ENCODE measurements at regions of chr11 and their contacts with region 1.

Region 1: DNA sequence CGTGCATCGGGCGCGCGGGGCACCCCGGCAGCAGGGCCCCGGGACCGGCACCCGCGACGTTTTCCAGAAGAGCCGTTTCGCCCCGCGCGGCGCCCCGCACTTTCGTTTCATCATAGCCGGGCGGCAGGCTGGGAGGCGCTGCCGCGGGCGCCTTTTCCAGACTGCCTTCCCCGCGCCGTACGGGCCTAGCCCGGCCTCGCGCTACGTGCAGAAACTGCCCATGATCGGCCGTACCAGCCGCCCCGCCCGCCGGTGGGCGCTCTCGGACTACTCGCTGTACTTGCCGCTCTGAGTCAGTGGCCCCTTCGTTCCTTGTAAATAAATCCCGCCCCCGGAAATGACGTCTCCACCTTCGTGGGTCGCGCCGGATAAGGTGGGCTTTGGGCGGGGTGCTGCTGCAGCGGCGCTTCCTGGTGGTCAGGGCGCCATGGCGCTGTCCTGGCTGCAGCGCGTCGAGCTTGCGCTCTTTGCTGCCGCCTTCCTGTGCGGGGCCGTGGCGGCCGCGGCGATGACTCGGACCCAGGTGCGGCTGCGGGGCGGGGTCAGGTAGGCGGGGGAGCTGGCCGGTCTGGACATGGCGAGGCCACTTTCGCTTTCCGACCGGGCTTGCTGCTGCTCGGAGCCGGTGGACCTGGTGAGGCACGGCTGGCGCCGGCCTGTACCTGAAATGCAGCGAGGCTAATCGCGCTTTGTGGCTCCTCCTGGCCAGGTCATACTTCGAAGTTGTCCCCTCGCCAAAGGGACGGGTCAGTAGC is at the start of gene TMEM179B:
- DNase-seq: peak; percentile 98 to 99
- ATAC-seq: peak; percentile 75 to 91 (median 78)
- H3K4me3 ChIP-seq: peak within 1 kb of the TSS; percentile 99
- H3K4me3 Mint-ChIP-seq: peak within 1 kb of the TSS; percentile 94
- H3K27ac ChIP-seq: peak within 1 kb of the TSS; percentile 91
- H3K27ac Mint-ChIP-seq: peak within 1 kb of the TSS; percentile 94 to 96
- H3K4me1 ChIP-seq: peaks cover 44% of the 10 kb centered on the region
- H3K4me1 Mint-ChIP-seq: peaks cover 32 to 45% of the 10 kb centered on the region in 2 donors
- H3K27me3 ChIP-seq: no peaks in the 10 kb centered on the region
- H3K27me3 Mint-ChIP-seq: no peaks in the 10 kb centered on the region
- CTCF ChIP-seq: peak; percentile 57
- total RNA-seq, gene TMEM179B: 33.7 to 41.1 (median 36.3) TPM

Region 2: GRCh38 chr11:62427630-62428233 is 359.4 kb before region 1 on chr11:
- intact Hi-C with region 1: loop called (anchors 1 kb)
- DNase-seq: no peak
- ATAC-seq: peak in 2 of 3 donors; percentile 34 to 43
- H3K4me3 ChIP-seq: no peak overlapping the region
- H3K4me3 Mint-ChIP-seq: peak overlapping the region; percentile 40
- H3K27ac ChIP-seq: peak overlapping the region; percentile 48
- H3K27ac Mint-ChIP-seq: peak overlapping the region; percentile 83 to 89
- H3K4me1 ChIP-seq: peaks cover 19% of the 10 kb centered on the region
- H3K4me1 Mint-ChIP-seq: peaks cover 56 to 64% of the 10 kb centered on the region in 2 donors
- H3K27me3 ChIP-seq: no peaks in the 10 kb centered on the region
- H3K27me3 Mint-ChIP-seq: no peaks in the 10 kb centered on the region
- CTCF ChIP-seq: no peak

Region 3: GRCh38 chr11:62463121-62463542 is 324.1 kb before region 1 on chr11:
- intact Hi-C with region 1: no loop called
- DNase-seq: no peak
- ATAC-seq: peak; percentile 72 to 82 (median 80)
- H3K4me3 ChIP-seq: no peak overlapping the region
- H3K4me3 Mint-ChIP-seq: peak overlapping the region; percentile 81
- H3K27ac ChIP-seq: no peak overlapping the region
- H3K27ac Mint-ChIP-seq: peak overlapping the region; percentile 43 to 85
- H3K4me1 ChIP-seq: peaks cover 7% of the 10 kb centered on the region
- H3K4me1 Mint-ChIP-seq: peaks cover 14% of the 10 kb centered on the region in 2 donors
- H3K27me3 ChIP-seq: no peaks in the 10 kb centered on the region
- H3K27me3 Mint-ChIP-seq: no peaks in the 10 kb centered on the region
- CTCF ChIP-seq: no peak

Region 4: DNA sequence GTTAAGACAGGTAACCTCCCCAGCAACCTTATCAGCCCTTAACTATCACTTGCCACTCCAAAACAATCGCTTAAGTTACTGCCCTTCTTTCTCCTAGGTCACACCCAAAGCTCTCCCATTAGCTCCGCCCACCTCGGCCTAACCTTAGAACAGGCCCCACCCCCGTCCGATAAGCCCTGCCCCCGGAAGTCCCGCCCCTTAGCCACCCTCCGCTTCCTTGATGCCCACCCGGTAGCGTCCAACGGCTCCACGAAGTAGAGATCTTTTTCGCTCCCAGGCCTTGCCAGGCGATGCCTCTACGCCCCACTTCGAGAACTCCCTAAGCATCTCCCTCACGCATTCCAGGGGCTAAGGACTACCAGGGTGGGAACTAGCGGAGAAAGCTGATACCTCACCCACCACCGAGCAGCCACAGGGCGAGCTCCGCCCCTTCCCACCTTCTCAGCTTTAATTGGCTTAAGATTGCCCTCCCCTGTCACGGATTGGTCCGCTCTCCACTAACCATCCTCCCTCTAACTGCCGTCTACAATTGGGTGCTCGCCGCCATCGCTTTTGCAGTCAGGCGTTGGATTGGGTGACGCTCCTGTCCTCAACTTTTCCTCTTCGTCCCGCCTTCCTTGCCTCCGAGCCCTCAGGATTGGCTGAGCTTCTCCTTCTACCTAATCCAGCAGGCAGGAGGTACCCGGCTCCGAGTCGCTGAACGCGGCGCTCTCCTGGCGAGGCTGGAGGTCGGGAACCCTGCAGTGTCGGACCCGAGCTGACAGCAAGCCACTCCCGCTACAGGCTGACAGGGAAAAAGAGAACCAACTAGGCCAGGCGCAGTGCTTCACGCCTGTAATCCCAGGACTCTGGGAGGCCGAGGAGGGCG is 33.2 kb before region 1 on chr11 and contains the start of gene ZBTB3:
- intact Hi-C with region 1: loop called (anchors 2 kb)
- DNase-seq: peak; percentile 93 to 99
- ATAC-seq: peak; percentile 92 to 98 (median 94)
- H3K4me3 ChIP-seq: peak within 1 kb of the TSS; percentile 83
- H3K4me3 Mint-ChIP-seq: peak within 1 kb of the TSS; percentile 96
- H3K27ac ChIP-seq: peak within 1 kb of the TSS; percentile 81
- H3K27ac Mint-ChIP-seq: peak within 1 kb of the TSS; percentile 91 to 96
- H3K4me1 ChIP-seq: peaks cover 22% of the 10 kb centered on the region
- H3K4me1 Mint-ChIP-seq: peaks cover 9 to 10% of the 10 kb centered on the region in 2 donors
- H3K27me3 ChIP-seq: no peaks in the 10 kb centered on the region
- H3K27me3 Mint-ChIP-seq: no peaks in the 10 kb centered on the region
- CTCF ChIP-seq: no peak
- total RNA-seq, gene ZBTB3: 5.4 to 9.6 (median 8.8) TPM

Region 5: DNA sequence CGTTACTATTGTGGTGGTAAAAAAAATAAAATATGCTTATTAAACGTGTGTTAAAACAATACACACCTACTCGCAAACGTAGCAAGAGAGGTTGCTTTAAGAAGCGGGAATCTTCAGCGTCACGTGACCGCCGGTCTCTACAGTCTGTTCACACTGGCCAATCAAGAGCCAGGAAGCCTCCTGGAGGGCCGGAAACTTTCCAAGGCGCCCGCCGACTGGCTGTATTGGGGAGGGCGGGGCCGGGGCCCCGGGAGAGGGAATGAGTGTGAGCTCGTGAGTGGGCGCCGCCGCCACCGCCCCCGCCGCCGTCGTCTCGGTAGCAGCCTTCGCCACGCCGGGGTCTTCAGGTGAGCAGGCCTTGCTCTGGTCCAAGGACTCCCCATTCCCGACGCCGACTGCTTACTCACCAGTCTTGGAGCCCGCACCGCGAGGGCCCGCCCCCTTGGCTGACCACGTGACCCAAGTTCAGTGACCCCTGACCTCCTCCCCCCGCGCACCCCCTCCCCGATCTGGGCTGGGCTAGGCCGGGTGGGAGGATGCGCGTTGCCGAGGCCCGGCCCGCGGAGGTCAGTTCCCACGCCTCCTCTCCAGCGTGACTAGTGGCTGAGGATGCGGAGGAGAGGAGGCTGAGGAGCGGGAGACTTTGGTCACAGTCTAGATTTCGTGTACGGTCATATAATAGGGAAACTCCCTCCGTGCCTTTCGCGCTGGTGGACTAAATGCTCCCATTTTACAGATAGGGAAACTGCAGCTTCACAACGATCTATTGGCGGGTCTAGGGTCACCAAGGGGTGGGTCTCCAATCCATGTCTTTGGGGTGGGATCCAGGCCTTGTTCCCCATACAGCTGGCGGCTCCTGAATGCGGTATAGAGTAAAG is 15.8 kb before region 1 on chr11 and contains the start of gene TAF6L:
- intact Hi-C with region 1: loop called (anchors 1 kb)
- DNase-seq: peak; percentile 89 to 92
- ATAC-seq: peak; percentile 87 to 95 (median 89)
- H3K4me3 ChIP-seq: peak within 1 kb of the TSS; percentile 70
- H3K4me3 Mint-ChIP-seq: peak within 1 kb of the TSS; percentile 93
- H3K27ac ChIP-seq: peak within 1 kb of the TSS; percentile 80
- H3K27ac Mint-ChIP-seq: peak within 1 kb of the TSS; percentile 93 to 99
- H3K4me1 ChIP-seq: peaks cover 25% of the 10 kb centered on the region
- H3K4me1 Mint-ChIP-seq: peaks cover 17 to 25% of the 10 kb centered on the region in 2 donors
- H3K27me3 ChIP-seq: no peaks in the 10 kb centered on the region
- H3K27me3 Mint-ChIP-seq: no peaks in the 10 kb centered on the region
- CTCF ChIP-seq: no peak
- total RNA-seq, gene TAF6L: 18.4 to 20.3 (median 18.8) TPM

Region 6: GRCh38 chr11:62805076-62805892 is 18.1 kb after region 1 on chr11 and contains the start of gene NXF1:
- intact Hi-C with region 1: loop called (anchors 1 kb)
- DNase-seq: peak; percentile 98 to 99
- ATAC-seq: peak; percentile 86 to 95 (median 86)
- H3K4me3 ChIP-seq: peak within 1 kb of the TSS; percentile 88
- H3K4me3 Mint-ChIP-seq: peak within 1 kb of the TSS; percentile 96
- H3K27ac ChIP-seq: peak within 1 kb of the TSS; percentile 78
- H3K27ac Mint-ChIP-seq: peak within 1 kb of the TSS; percentile 94 to 99
- H3K4me1 ChIP-seq: peaks cover 25% of the 10 kb centered on the region
- H3K4me1 Mint-ChIP-seq: peaks cover 20 to 41% of the 10 kb centered on the region in 2 donors
- H3K27me3 ChIP-seq: no peaks in the 10 kb centered on the region
- H3K27me3 Mint-ChIP-seq: no peaks in the 10 kb centered on the region
- CTCF ChIP-seq: peak; percentile 25
- total RNA-seq, gene NXF1: 284 to 341 (median 319) TPM

Region 7: GRCh38 chr11:62880803-62881578 is 93.8 kb after region 1 on chr11 and contains the start of gene SLC3A2:
- intact Hi-C with region 1: loop called (anchors 1 kb)
- DNase-seq: peak; percentile 88 to 94
- ATAC-seq: peak; percentile 72 to 89 (median 80)
- H3K4me3 ChIP-seq: peak within 1 kb of the TSS; percentile 100
- H3K4me3 Mint-ChIP-seq: peak within 1 kb of the TSS; percentile 100
- H3K27ac ChIP-seq: peak within 1 kb of the TSS; percentile 90
- H3K27ac Mint-ChIP-seq: peak within 1 kb of the TSS; percentile 99
- H3K4me1 ChIP-seq: peaks cover 36% of the 10 kb centered on the region
- H3K4me1 Mint-ChIP-seq: peaks cover 41 to 56% of the 10 kb centered on the region in 2 donors
- H3K27me3 ChIP-seq: no peaks in the 10 kb centered on the region
- H3K27me3 Mint-ChIP-seq: no peaks in the 10 kb centered on the region
- CTCF ChIP-seq: peak; percentile 82
- total RNA-seq, gene SLC3A2: 200 to 235 (median 207) TPM

Measured in natural killer cell (primary cell).